GM12878 (cell line): ENCODE measurements at regions of chr10 and their contacts with region 1.

Region 1: DNA sequence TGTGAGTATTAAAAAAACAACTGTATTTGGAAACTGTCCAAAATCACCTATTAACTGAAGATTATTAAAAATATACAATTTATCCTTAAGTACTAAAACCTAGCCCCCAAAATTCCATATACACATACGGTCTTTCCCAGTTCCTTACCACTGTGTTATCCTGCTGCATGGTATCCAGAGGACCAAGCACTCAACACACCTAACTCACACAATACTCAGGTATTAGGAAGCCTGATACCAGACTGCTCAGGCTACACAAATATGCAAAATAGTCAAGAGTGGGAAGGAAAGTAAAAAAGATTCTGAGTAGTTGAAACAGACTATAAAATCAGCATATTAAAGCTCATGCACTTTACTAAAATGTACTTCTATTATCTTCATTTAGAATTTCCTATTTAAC is 67.2 kb downstream of the EPC1 start:
- DNase-seq: no peak
- ATAC-seq: no peak
- H3K4me3 ChIP-seq: no peak overlapping the region
- H3K27ac ChIP-seq: no peak overlapping the region
- H3K4me1 ChIP-seq: no peaks in the 10 kb centered on the region
- H3K27me3 ChIP-seq: no peaks in the 10 kb centered on the region
- CTCF ChIP-seq: no peak
- EP300 ChIP-seq: no peak
- POLR2A ChIP-seq: no peak
- RAD21 ChIP-seq: no peak

Region 2: DNA sequence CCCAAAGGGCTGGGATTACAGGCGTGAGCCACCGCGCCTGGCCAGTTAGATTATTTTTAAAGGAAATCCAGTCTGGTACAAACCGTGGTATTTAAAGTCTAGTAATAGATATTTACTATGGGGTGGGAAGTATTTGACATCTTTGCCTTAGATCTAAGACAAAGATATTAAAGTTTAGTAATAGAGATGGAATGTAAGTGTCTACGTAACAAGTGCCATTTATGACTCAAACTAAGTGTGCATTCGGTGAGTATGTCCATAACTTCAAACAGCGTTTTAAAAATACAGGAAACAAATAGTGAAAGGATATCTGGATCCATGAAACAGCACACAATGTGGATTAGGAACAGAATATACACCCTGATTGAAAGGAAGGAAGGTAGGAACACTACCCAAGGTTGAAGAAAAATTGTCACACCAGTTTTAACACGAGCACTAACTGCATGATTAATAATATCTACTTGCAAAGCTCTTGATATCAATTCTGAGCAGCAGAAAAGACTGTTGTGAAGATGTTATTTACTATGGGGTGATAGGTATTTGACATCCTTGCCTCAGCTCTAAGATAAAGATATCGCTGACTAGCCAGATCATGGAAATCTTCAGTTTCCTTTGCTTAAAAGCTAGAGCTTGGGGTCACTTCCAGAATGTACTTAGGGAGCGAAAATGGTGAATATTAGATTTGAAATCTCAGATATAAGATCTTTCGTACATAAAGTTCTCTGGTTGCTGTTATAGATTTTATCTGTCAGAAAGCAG is 18.4 kb after region 1 on chr10:
- CTCF ChIA-PET with region 1: interaction called, 5 read pairs
- POLR2A ChIA-PET with region 1: interaction called, 3 read pairs
- RAD21 ChIA-PET with region 1: no interaction called
- SMC1A ChIA-PET with region 1: interaction called, 15 read pairs
- in situ Hi-C with region 1: no loop called
- intact Hi-C with region 1: no loop called
- DNase-seq: no peak
- ATAC-seq: no peak
- H3K4me3 ChIP-seq: no peak overlapping the region
- H3K27ac ChIP-seq: no peak overlapping the region
- H3K4me1 ChIP-seq: no peaks in the 10 kb centered on the region
- H3K27me3 ChIP-seq: no peaks in the 10 kb centered on the region
- CTCF ChIP-seq: no peak
- EP300 ChIP-seq: no peak
- POLR2A ChIP-seq: no peak
- RAD21 ChIP-seq: no peak

Region 3: GRCh38 chr10:32471232-32471631 is 191.4 kb after region 1 on chr10:
- CTCF ChIA-PET with region 1: no interaction called
- POLR2A ChIA-PET with region 1: no interaction called
- RAD21 ChIA-PET with region 1: no interaction called
- SMC1A ChIA-PET with region 1: no interaction called
- in situ Hi-C with region 1: no loop called
- intact Hi-C with region 1: no loop called
- DNase-seq: no peak
- ATAC-seq: no peak
- H3K4me3 ChIP-seq: no peak overlapping the region
- H3K27ac ChIP-seq: no peak overlapping the region
- H3K4me1 ChIP-seq: no peaks in the 10 kb centered on the region
- H3K27me3 ChIP-seq: no peaks in the 10 kb centered on the region
- CTCF ChIP-seq: no peak
- EP300 ChIP-seq: no peak
- POLR2A ChIP-seq: no peak
- RAD21 ChIP-seq: no peak